Endothelial cell of umbilical vein (primary cell): ENCODE measurements at regions of chr4 and their contacts with region 1.

Region 1: GRCh38 chr4:183348706-183349659 is 26.8 kb upstream of the CLDN24 start:
- DNase-seq: peak; percentile 76
- H3K4me3 ChIP-seq: no peak overlapping the region
- H3K27ac ChIP-seq: peak overlapping the region; percentile 44
- H3K4me1 ChIP-seq: peaks cover 10% of the 10 kb centered on the region
- H3K27me3 ChIP-seq: no peaks in the 10 kb centered on the region
- CTCF ChIP-seq: no peak
- POLR2A ChIP-seq: no peak

Region 2: GRCh38 chr4:183321079-183321478 is 27.9 kb before region 1 on chr4:
- CTCF ChIA-PET with region 1: no interaction called
- POLR2A ChIA-PET with region 1: interaction called, 10 read pairs
- dilution Hi-C with region 1: no loop called
- intact Hi-C with region 1: no loop called
- DNase-seq: no peak
- H3K4me3 ChIP-seq: no peak overlapping the region
- H3K27ac ChIP-seq: no peak overlapping the region
- H3K4me1 ChIP-seq: no peaks in the 10 kb centered on the region
- H3K27me3 ChIP-seq: no peaks in the 10 kb centered on the region
- CTCF ChIP-seq: no peak
- POLR2A ChIP-seq: no peak

Region 3: DNA sequence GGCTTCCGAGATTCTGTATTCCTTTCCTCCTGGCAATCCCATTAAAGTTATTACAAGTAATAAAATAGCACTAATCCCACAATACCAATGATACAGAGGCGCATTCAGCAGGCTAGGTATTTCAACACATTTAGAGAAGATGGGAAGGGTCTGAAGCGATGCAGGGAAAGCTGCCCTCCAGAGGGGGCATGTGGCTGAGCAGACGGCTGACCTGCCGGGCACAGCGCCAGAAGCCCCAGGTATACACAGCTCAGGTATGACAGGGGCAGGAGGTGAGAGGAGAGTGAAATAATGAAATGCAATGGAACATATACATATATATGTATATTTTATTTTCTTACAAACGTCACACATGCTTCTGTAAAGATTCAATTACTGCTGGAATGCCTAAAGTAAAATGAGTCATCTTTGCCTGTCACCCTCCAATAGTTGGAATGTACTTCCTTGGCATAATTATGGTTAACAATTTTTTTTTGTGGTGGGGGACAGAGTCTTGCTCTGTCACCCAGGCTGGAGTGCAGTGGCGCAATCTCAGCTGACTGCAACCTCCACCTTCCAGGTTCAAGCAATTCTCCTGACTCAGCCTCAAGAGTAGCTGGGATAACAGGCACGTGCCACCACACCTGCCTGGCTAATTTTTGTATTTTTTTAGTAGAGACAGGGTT is 74.1 kb after region 1 on chr4:
- CTCF ChIA-PET with region 1: no interaction called
- POLR2A ChIA-PET with region 1: no interaction called
- dilution Hi-C with region 1: no loop called
- intact Hi-C with region 1: no loop called
- DNase-seq: no peak
- H3K4me3 ChIP-seq: no peak overlapping the region
- H3K27ac ChIP-seq: no peak overlapping the region
- H3K4me1 ChIP-seq: no peaks in the 10 kb centered on the region
- H3K27me3 ChIP-seq: no peaks in the 10 kb centered on the region
- CTCF ChIP-seq: no peak
- POLR2A ChIP-seq: no peak